ENCODE measurements at regions of chr5 and their contacts with region 1.

Region 1: DNA sequence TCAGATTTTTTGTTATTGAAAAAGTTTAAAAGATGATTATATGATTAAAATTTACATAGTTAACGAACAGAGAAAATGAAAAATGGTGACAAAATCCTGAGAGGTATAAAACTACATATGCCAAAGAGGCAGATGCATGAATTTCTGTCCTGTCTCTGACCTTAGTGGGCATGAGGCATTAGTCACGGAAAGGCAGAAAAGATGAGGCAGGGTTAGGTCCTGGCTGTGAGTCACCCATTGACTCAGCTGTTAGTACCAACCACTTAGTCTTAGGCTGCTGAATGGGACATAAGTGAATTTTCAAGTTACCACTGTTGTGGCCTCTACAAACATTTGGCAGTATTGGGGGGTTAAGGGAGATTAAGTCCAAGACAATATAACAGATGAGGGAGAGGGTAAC is 33.1 kb downstream of the RASA1 start:
- DNase-seq: peak; percentile 66
- H3K4me3 ChIP-seq: no peak overlapping the region
- H3K27me3 ChIP-seq: no peaks in the 10 kb centered on the region
- CTCF ChIP-seq: no peak

Region 2: GRCh38 chr5:86878250-86878649 is 422.5 kb before region 1 on chr5:
- CTCF ChIA-PET with region 1: no interaction called
- POLR2A ChIA-PET with region 1: no interaction called
- DNase-seq: no peak
- H3K4me3 ChIP-seq: no peak overlapping the region
- H3K27me3 ChIP-seq: no peaks in the 10 kb centered on the region
- CTCF ChIP-seq: no peak

Region 3: GRCh38 chr5:87113861-87114260 is 186.9 kb before region 1 on chr5:
- CTCF ChIA-PET with region 1: no interaction called
- POLR2A ChIA-PET with region 1: no interaction called
- DNase-seq: peak; percentile 59
- H3K4me3 ChIP-seq: no peak overlapping the region
- H3K27me3 ChIP-seq: no peaks in the 10 kb centered on the region
- CTCF ChIP-seq: no peak

Region 4: DNA sequence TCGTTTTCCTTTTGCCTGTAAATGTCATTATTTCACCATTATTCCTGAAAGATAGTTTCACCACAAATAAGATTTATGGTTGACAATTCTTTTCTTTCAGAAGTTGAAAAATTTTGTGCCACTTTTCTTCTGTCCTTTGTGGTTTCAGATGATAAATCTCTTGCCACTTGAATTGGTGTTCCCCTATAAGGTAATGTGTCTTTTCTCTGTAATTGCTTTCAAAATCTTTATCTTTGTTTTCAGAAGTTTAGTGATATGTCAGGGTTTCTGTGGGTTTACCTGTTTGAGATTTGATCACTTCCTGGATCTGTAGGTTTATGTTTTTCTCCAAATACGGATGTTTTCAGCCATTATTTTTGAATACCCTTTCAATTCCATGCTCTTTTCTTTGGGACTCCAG is 18.5 kb before region 1 on chr5:
- CTCF ChIA-PET with region 1: interaction called, 4 read pairs
- POLR2A ChIA-PET with region 1: interaction called, 21 read pairs
- DNase-seq: no peak
- H3K4me3 ChIP-seq: no peak overlapping the region
- H3K27me3 ChIP-seq: no peaks in the 10 kb centered on the region
- CTCF ChIP-seq: no peak

Region 5: DNA sequence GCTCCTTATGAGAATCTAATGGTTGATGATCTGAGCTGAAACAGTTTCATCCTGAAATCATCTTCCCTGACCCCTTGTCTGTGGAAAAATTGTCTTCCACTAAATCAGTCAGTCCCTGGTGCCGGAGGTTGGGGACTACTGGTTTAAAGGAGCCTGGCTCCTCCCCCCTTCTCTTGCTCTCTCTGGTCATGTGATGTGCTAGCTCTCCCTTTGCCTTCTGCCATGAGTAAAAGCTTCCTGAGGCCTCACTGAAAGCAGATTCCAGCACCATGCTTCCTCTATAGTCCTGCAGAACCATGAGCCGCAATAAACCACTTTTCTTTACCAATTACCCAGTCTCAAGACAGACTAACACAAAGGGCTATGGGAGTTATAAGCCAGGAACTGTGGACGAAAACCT is 21.6 kb after region 1 on chr5:
- CTCF ChIA-PET with region 1: no interaction called
- POLR2A ChIA-PET with region 1: no interaction called
- DNase-seq: no peak
- H3K4me3 ChIP-seq: no peak overlapping the region
- H3K27me3 ChIP-seq: no peaks in the 10 kb centered on the region
- CTCF ChIP-seq: no peak

Measured in BJ (cell line).